ENCODE measurements at regions of chr2 and their contacts with region 1.

Region 1: GRCh38 chr2:196131384-196131937 is 39.9 kb downstream of the STK17B start:
- DNase-seq: peak; percentile 69 to 77 (median 70)
- H3K4me3 ChIP-seq: no peak overlapping the region
- H3K4me3 Mint-ChIP-seq: no peak overlapping the region
- H3K27ac ChIP-seq: peak overlapping the region in 1 of 2 donors; percentile 54
- H3K27ac Mint-ChIP-seq: peak overlapping the region in 6 of 7 donors; percentile 74 to 88 (median 84)
- H3K4me1 ChIP-seq: no peaks in the 10 kb centered on the region
- H3K4me1 Mint-ChIP-seq: peaks cover 8% of the 10 kb centered on the region
- H3K27me3 ChIP-seq: no peaks in the 10 kb centered on the region
- H3K27me3 Mint-ChIP-seq: peaks cover 0 to 2% (median 0%) of the 10 kb centered on the region in 3 donors
- CTCF ChIP-seq: peak; percentile 76

Region 2: DNA sequence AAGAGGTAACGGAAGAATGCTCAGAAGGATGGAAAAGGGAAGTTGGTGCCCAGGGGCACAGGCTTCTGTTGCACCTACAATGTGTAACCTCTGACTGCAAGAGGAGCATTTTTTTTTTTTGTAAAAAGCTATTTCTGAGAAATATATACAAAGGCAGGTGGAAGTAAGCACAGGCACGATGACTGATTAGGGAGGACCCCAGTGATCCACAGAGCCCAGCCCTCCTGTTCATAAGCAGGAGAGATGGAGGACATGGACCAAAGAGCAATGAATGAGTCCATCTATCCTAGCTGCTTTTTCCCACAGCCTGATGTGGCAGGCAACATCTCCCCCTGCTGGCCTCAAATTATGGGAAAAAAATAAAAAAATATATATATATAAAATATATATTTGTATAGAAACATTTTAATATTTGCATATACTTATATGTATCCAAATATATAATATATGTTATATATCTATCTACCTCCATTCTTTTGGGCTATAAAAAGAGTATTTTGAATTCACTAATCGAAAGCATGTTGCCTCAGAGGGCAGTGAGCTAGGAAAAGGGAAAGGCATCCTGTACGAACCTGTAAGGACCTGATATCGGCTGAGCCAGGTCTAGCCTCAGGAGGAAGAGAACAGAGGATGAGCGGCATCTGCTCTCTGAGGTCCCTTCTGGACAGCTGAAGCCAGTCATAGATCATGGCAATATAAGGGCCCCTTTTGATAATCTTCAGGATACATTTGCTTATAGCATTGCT is 205.9 kb after region 1 on chr2:
- intact Hi-C with region 1: loop called (anchors 2 to 10 kb)
- DNase-seq: peak; percentile 4 to 26 (median 18)
- H3K4me3 ChIP-seq: no peak overlapping the region
- H3K4me3 Mint-ChIP-seq: no peak overlapping the region
- H3K27ac ChIP-seq: no peak overlapping the region
- H3K27ac Mint-ChIP-seq: no peak overlapping the region
- H3K4me1 ChIP-seq: no peaks in the 10 kb centered on the region
- H3K4me1 Mint-ChIP-seq: no peaks in the 10 kb centered on the region
- H3K27me3 ChIP-seq: no peaks in the 10 kb centered on the region
- H3K27me3 Mint-ChIP-seq: peaks cover 0 to 2% (median 0%) of the 10 kb centered on the region in 3 donors
- CTCF ChIP-seq: peak; percentile 61

Measured in CD14-positive monocyte (primary cell).